Activated B cell treated with CpG ODN at 0.5 μM for 24 hours (primary cell): ENCODE measurements at regions of chr12 and their contacts with region 1.

Region 1: DNA sequence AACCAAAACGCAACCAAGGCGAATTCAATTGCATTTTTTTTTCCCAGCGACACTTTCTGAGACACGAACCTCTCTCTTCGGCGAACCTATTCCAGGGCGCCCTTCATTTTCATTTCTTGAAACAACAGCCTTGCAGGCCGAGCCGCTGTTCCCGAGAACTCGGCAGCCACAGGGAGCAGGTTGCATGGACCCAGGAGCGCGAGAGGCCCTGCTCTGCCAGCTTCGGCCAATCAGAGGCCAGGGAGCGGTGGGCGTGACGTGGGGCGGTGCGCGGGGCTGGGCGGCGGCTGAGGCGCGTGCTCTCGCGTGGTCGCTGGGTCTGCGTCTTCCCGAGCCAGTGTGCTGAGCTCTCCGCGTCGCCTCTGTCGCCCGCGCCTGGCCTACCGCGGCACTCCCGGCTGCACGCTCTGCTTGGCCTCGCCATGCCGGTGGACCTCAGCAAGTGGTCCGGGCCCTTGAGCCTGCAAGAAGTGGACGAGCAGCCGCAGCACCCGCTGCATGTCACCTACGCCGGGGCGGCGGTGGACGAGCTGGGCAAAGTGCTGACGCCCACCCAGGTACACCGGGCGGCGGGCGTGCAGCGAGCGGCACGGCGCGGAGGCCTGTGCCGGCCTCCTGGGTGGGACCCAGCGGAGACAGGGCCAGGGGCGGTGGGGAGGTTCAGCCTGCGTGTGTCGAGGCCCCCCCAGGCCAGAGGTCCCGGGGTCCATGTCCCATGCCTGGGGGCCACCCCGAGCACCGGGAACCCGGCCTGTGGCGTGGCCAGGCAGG is at the start of gene PEBP1:
- DNase-seq: peak; percentile 91
- ATAC-seq: peak; percentile 99
- H3K4me3 Mint-ChIP-seq: peak within 1 kb of the TSS; percentile 98
- H3K27ac Mint-ChIP-seq: peak within 1 kb of the TSS; percentile 86
- H3K4me1 Mint-ChIP-seq: peaks cover 20% of the 10 kb centered on the region
- H3K27me3 Mint-ChIP-seq: no peaks in the 10 kb centered on the region
- CTCF ChIP-seq: no peak
- total RNA-seq, gene PEBP1: 102 and 114 TPM in 2 replicates

Region 2: DNA sequence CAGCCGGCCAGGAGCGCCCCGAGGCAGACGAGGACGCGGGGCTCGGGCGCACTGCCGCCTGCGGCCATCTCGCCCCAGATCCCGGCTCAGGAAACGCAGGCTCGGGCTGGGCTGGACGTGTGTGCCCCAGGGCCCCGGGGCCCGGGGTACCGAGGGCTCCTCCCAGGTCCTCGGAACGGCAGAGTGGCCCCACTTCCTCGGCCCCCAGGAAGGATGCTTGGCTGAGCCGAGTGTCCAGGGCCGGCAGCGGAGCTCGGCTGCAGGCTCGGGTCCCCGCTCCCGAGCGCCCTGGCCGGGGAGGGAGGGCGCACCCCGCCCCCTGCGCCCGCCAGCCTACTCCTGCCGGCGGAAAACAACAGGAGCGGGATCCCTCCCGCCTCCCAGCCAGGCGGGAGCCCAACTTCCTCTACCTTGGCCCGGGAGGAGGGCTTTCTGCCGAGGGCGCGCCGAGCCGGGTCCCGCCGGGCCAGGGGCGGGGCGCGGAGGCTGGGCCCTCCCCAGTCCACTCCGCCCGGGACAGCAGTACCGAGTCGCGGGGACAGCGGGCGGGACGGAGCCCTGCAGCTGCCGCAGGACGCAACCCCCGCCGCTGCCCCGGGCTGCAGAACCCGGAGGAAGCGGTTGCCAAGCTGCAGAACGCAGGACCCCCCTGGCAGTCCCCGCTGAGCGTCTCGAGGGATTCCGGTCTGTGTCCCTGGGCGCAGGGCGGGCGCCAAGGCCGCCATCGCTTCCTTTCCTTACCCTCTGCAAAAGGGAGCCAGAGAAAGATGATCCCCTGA is 32.2 kb before region 1 on chr12 and contains the start of gene VSIG10:
- CTCF ChIA-PET with region 1: no interaction called
- POLR2A ChIA-PET with region 1: interaction called, 3 read pairs
- intact Hi-C with region 1: loop called (anchors 1 kb)
- DNase-seq: peak; percentile 29
- ATAC-seq: peak; percentile 82
- H3K4me3 Mint-ChIP-seq: peak within 1 kb of the TSS; percentile 84
- H3K27ac Mint-ChIP-seq: no peak within 1 kb of the TSS
- H3K4me1 Mint-ChIP-seq: peaks cover 9% of the 10 kb centered on the region
- H3K27me3 Mint-ChIP-seq: peaks cover 21% of the 10 kb centered on the region
- CTCF ChIP-seq: no peak
- total RNA-seq, gene VSIG10: 1.6 and 2.4 TPM in 2 replicates

Region 3: GRCh38 chr12:118120579-118121363 is 15.2 kb before region 1 on chr12:
- CTCF ChIA-PET with region 1: interaction called, 5 read pairs
- POLR2A ChIA-PET with region 1: interaction called, 5 read pairs
- intact Hi-C with region 1: loop called (anchors 1 kb)
- DNase-seq: peak; percentile 37
- ATAC-seq: peak; percentile 61
- H3K4me3 Mint-ChIP-seq: no peak overlapping the region
- H3K27ac Mint-ChIP-seq: peak overlapping the region; percentile 46
- H3K4me1 Mint-ChIP-seq: peaks cover 2% of the 10 kb centered on the region
- H3K27me3 Mint-ChIP-seq: no peaks in the 10 kb centered on the region
- CTCF ChIP-seq: peak; percentile 77

Region 4: GRCh38 chr12:118175823-118176447 is 40.0 kb after region 1 on chr12:
- CTCF ChIA-PET with region 1: no interaction called
- POLR2A ChIA-PET with region 1: no interaction called
- intact Hi-C with region 1: loop called (anchors 5 kb)
- DNase-seq: no peak
- ATAC-seq: peak; percentile 95
- H3K4me3 Mint-ChIP-seq: peak overlapping the region; percentile 5
- H3K27ac Mint-ChIP-seq: peak overlapping the region; percentile 51
- H3K4me1 Mint-ChIP-seq: peaks cover 13% of the 10 kb centered on the region
- H3K27me3 Mint-ChIP-seq: no peaks in the 10 kb centered on the region
- CTCF ChIP-seq: no peak

Region 5: DNA sequence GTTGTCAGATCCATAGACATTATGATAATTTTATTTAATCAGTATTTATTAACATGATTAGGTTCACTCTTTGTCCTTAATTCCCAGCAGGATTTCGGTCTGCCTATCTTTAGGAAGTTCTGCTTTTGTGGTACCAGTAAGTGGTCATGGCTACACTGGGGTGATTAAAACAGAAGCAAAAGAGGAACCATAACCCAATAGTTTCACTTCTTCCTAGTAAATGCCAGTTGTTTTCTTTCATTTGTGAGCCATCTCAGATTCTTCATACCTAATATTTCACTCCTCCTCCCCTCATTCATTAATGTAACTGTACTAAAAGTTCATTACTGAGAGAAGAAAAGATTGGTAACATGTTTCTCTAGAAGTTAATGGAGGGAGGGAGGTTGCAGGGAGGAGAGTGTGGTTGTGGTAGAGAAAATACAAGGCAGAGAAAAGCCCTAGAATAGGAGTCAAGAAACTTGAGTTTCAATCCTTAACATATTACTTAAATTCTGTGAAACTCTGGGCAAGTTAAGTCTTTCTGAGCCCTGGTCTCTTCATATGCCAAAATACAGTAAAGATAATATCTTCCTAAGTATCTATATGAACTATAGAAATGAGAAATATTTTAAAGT is 101.2 kb after region 1 on chr12:
- CTCF ChIA-PET with region 1: no interaction called
- POLR2A ChIA-PET with region 1: no interaction called
- intact Hi-C with region 1: no loop called
- DNase-seq: no peak
- ATAC-seq: peak; percentile 90
- H3K4me3 Mint-ChIP-seq: peak overlapping the region; percentile 77
- H3K27ac Mint-ChIP-seq: peak overlapping the region; percentile 89
- H3K4me1 Mint-ChIP-seq: peaks cover 45% of the 10 kb centered on the region
- H3K27me3 Mint-ChIP-seq: no peaks in the 10 kb centered on the region
- CTCF ChIP-seq: no peak